HepG2 (cell line): ENCODE measurements at regions of chr19 and their contacts with region 1.

Region 1: GRCh38 chr19:38964738-38965137 is 10.8 kb downstream of the FBXO17 start:
- DNase-seq: peak; percentile 57
- ATAC-seq: peak; percentile 62
- H3K4me3 ChIP-seq: no peak overlapping the region
- H3K27ac ChIP-seq: no peak overlapping the region
- H3K4me1 ChIP-seq: peaks cover 49% of the 10 kb centered on the region
- H3K27me3 ChIP-seq: no peaks in the 10 kb centered on the region
- CTCF ChIP-seq: no peak
- EP300 ChIP-seq: no peak
- POLR2A ChIP-seq: no peak
- RAD21 ChIP-seq: no peak

Region 2: GRCh38 chr19:38975214-38975860 is 10.6 kb after region 1 on chr19 and contains the start of gene FBXO17:
- CTCF ChIA-PET with region 1: no interaction called
- POLR2A ChIA-PET with region 1: interaction called, 10 read pairs
- in situ Hi-C with region 1: no loop called
- intact Hi-C with region 1: no loop called
- DNase-seq: peak; percentile 47
- ATAC-seq: peak; percentile 74
- H3K4me3 ChIP-seq: peak within 1 kb of the TSS; percentile 67 to 81 (median 80)
- H3K27ac ChIP-seq: peak within 1 kb of the TSS; percentile 99
- H3K4me1 ChIP-seq: peaks cover 57% of the 10 kb centered on the region
- H3K27me3 ChIP-seq: no peaks in the 10 kb centered on the region
- CTCF ChIP-seq: no peak
- EP300 ChIP-seq: no peak
- POLR2A ChIP-seq: peak; percentile 28 to 41; a peak in 3 of 4 replicates
- RAD21 ChIP-seq: no peak
- total RNA-seq, gene FBXO17: 17.9 and 22.1 TPM in 2 replicates

Region 3: GRCh38 chr19:39021063-39021462 is 56.3 kb after region 1 on chr19:
- CTCF ChIA-PET with region 1: no interaction called
- POLR2A ChIA-PET with region 1: no interaction called
- in situ Hi-C with region 1: no loop called
- intact Hi-C with region 1: no loop called
- DNase-seq: no peak
- ATAC-seq: no peak
- H3K4me3 ChIP-seq: no peak overlapping the region
- H3K27ac ChIP-seq: no peak overlapping the region
- H3K4me1 ChIP-seq: no peaks in the 10 kb centered on the region
- H3K27me3 ChIP-seq: no peaks in the 10 kb centered on the region
- CTCF ChIP-seq: no peak
- EP300 ChIP-seq: no peak
- POLR2A ChIP-seq: no peak
- RAD21 ChIP-seq: no peak

Region 4: GRCh38 chr19:39038098-39038497 is 73.4 kb after region 1 on chr19:
- CTCF ChIA-PET with region 1: interaction called, 7 read pairs
- POLR2A ChIA-PET with region 1: no interaction called
- in situ Hi-C with region 1: no loop called
- intact Hi-C with region 1: loop called (anchors 5 kb)
- DNase-seq: peak; percentile 61
- ATAC-seq: peak; percentile 98
- H3K4me3 ChIP-seq: peak overlapping the region in 1 of 3 experiments; percentile 46; a peak in 2 of 6 replicates
- H3K27ac ChIP-seq: no peak overlapping the region
- H3K4me1 ChIP-seq: peaks cover 25% of the 10 kb centered on the region
- H3K27me3 ChIP-seq: no peaks in the 10 kb centered on the region; a peak in 2 of 5 replicates
- CTCF ChIP-seq: peak; percentile 79
- EP300 ChIP-seq: no peak
- POLR2A ChIP-seq: no peak
- RAD21 ChIP-seq: 0 out of 2 replicates have a peak, but pooled peaks have one; percentile 32

Region 5: DNA sequence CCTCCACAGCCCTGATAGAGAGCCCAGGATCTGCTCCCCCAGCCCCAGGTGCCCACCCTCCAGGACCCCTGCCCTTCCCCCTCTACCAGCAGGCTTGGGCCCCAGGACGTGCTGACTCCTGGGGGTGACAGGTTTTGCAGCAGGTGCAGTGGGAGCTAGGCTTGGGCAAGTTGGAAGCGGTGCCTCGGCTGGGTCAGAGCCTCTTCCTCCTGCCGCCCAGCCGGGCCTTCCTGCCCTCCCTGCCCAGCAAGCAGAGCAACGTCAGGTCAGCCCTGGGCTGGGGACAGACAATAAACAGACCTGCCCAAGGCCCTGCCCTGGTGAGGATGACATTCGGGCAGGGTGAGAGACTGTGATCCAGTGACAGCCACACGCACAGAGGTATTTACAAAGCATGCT is 222.8 kb after region 1 on chr19:
- CTCF ChIA-PET with region 1: no interaction called
- POLR2A ChIA-PET with region 1: no interaction called
- in situ Hi-C with region 1: no loop called
- intact Hi-C with region 1: loop called (anchors 10 kb)
- DNase-seq: no peak
- ATAC-seq: peak; percentile 46
- H3K4me3 ChIP-seq: no peak overlapping the region
- H3K27ac ChIP-seq: no peak overlapping the region
- H3K4me1 ChIP-seq: peaks cover 10% of the 10 kb centered on the region; the same call in 1 of the 2 replicates
- H3K27me3 ChIP-seq: peaks cover 0 to 7% of the 10 kb centered on the region in 2 experiments; a peak in 1 of 5 replicates
- CTCF ChIP-seq: no peak
- EP300 ChIP-seq: no peak
- POLR2A ChIP-seq: no peak
- RAD21 ChIP-seq: no peak

Region 6: DNA sequence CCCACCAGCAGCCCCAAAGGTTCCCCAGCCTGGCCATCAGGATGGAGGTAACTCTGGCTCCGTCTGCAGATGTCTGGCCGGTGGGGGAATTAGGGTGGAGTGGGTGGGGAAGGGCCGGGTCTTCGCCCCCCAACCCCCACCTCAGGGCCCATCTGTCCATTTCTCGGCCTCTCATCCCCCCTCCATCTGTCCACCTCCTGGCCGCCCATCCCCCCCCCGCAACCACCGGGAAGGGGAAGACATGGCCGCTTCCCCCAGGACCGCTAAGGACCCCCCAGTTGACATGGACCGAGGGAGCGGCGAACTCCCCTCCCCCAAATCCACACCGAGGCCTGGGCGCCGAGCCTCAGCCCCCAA is 355.1 kb after region 1 on chr19:
- CTCF ChIA-PET with region 1: no interaction called
- POLR2A ChIA-PET with region 1: no interaction called
- in situ Hi-C with region 1: no loop called
- intact Hi-C with region 1: loop called (anchors 5 kb)
- DNase-seq: no peak
- ATAC-seq: no peak
- H3K4me3 ChIP-seq: peak overlapping the region; percentile 49 to 84 (median 74); a peak in 5 of 6 replicates
- H3K27ac ChIP-seq: no peak overlapping the region
- H3K4me1 ChIP-seq: peaks cover 14% of the 10 kb centered on the region
- H3K27me3 ChIP-seq: peaks cover 0 to 22% of the 10 kb centered on the region in 2 experiments; a peak in 2 of 5 replicates
- CTCF ChIP-seq: no peak
- EP300 ChIP-seq: no peak
- POLR2A ChIP-seq: no peak
- RAD21 ChIP-seq: no peak